ENCODE measurements at regions of chr11 and their contacts with region 1.

Region 1: GRCh38 chr11:95150946-95151684 is 61.5 kb downstream of the ENDOD1 start:
- DNase-seq: peak; percentile 91 to 93 (median 91)
- H3K4me3 ChIP-seq: peak overlapping the region; percentile 45 to 87
- H3K4me3 Mint-ChIP-seq: peak overlapping the region; percentile 85 to 96 (median 90)
- H3K27ac ChIP-seq: peak overlapping the region; percentile 80
- H3K27ac Mint-ChIP-seq: peak overlapping the region; percentile 90 to 99 (median 97)
- H3K4me1 ChIP-seq: peaks cover 35% of the 10 kb centered on the region
- H3K4me1 Mint-ChIP-seq: peaks cover 26 to 44% (median 36%) of the 10 kb centered on the region in 4 donors
- H3K27me3 ChIP-seq: no peaks in the 10 kb centered on the region
- H3K27me3 Mint-ChIP-seq: peaks cover 2 to 8% of the 10 kb centered on the region in 2 donors

Region 2: DNA sequence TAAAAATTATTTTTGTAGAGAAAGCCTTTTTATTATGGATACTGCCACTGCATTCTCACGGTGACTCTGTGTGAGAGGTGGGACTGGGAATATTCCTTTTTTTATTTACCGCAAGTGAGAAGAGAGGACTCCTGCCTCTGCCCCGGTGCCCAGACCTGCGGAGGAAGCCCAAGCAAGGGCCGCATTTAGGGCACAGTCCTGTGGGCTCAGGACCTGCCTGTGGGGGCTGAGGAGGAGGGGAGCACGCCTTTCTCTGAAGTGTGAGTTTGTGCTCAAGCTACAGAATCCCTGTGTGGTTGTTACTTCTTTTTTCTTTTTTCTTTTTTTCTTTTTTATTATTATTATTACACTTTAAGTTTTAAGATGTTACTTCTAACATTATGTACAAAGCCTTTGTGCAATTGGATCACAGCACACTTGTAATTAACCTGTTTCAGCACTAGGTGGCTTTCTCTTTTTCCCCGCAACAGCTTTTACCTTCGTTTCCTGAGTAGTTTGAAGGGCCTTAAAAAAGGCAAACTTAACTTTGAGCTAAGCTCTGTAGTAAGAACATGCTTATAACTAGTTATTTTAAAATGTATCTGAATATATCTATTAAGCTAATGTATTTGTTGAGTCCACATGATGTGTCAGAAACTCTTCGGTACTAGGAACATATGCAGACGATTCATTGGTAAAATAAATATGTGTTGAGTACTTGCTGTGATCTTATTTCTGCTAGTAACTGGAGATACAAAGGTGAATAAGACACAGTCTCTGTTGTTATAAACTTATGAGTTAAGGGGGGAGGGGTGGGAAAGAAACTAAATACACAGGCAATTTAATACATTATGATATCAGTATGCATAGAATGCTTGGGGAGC is 364.6 kb before region 1 on chr11:
- CTCF ChIA-PET with region 1: no interaction called
- POLR2A ChIA-PET with region 1: no interaction called
- intact Hi-C with region 1: loop called (anchors 5 kb)
- DNase-seq: peak in 3 of 5 donors; percentile 15 to 21 (median 16)
- H3K4me3 ChIP-seq: no peak overlapping the region
- H3K4me3 Mint-ChIP-seq: no peak overlapping the region
- H3K27ac ChIP-seq: no peak overlapping the region
- H3K27ac Mint-ChIP-seq: no peak overlapping the region
- H3K4me1 ChIP-seq: no peaks in the 10 kb centered on the region
- H3K4me1 Mint-ChIP-seq: no peaks in the 10 kb centered on the region
- H3K27me3 ChIP-seq: peaks cover 4% of the 10 kb centered on the region
- H3K27me3 Mint-ChIP-seq: peaks cover 9 to 11% of the 10 kb centered on the region in 2 donors

Region 3: GRCh38 chr11:95119374-95120060 is 31.6 kb before region 1 on chr11:
- CTCF ChIA-PET with region 1: no interaction called
- POLR2A ChIA-PET with region 1: no interaction called
- intact Hi-C with region 1: no loop called
- DNase-seq: no peak
- H3K4me3 ChIP-seq: no peak overlapping the region
- H3K4me3 Mint-ChIP-seq: no peak overlapping the region
- H3K27ac ChIP-seq: no peak overlapping the region
- H3K27ac Mint-ChIP-seq: no peak overlapping the region
- H3K4me1 ChIP-seq: no peaks in the 10 kb centered on the region
- H3K4me1 Mint-ChIP-seq: peaks cover 0 to 9% (median 2%) of the 10 kb centered on the region in 4 donors
- H3K27me3 ChIP-seq: no peaks in the 10 kb centered on the region
- H3K27me3 Mint-ChIP-seq: no peaks in the 10 kb centered on the region

Region 4: GRCh38 chr11:95138448-95138847 is 12.7 kb before region 1 on chr11:
- CTCF ChIA-PET with region 1: interaction called, 11 read pairs
- POLR2A ChIA-PET with region 1: no interaction called
- intact Hi-C with region 1: no loop called
- DNase-seq: no peak
- H3K4me3 ChIP-seq: no peak overlapping the region
- H3K4me3 Mint-ChIP-seq: no peak overlapping the region
- H3K27ac ChIP-seq: no peak overlapping the region
- H3K27ac Mint-ChIP-seq: no peak overlapping the region
- H3K4me1 ChIP-seq: no peaks in the 10 kb centered on the region
- H3K4me1 Mint-ChIP-seq: peaks cover 0 to 2% (median 0%) of the 10 kb centered on the region in 4 donors
- H3K27me3 ChIP-seq: no peaks in the 10 kb centered on the region
- H3K27me3 Mint-ChIP-seq: peaks cover 0 to 10% of the 10 kb centered on the region in 2 donors

Region 5: GRCh38 chr11:95254131-95254704 is 103.1 kb after region 1 on chr11:
- CTCF ChIA-PET with region 1: interaction called, 8 read pairs
- POLR2A ChIA-PET with region 1: interaction called, 12 read pairs
- intact Hi-C with region 1: no loop called
- DNase-seq: peak; percentile 79 to 88 (median 81)
- H3K4me3 ChIP-seq: peak overlapping the region; percentile 26 to 36
- H3K4me3 Mint-ChIP-seq: peak overlapping the region; percentile 88 to 96 (median 92)
- H3K27ac ChIP-seq: peak overlapping the region; percentile 49
- H3K27ac Mint-ChIP-seq: peak overlapping the region; percentile 91 to 99 (median 95)
- H3K4me1 ChIP-seq: peaks cover 38% of the 10 kb centered on the region
- H3K4me1 Mint-ChIP-seq: peaks cover 23 to 42% (median 36%) of the 10 kb centered on the region in 4 donors
- H3K27me3 ChIP-seq: no peaks in the 10 kb centered on the region
- H3K27me3 Mint-ChIP-seq: peaks cover 0 to 2% of the 10 kb centered on the region in 2 donors

Region 6: GRCh38 chr11:95279921-95280868 is 129.1 kb after region 1 on chr11:
- CTCF ChIA-PET with region 1: no interaction called
- POLR2A ChIA-PET with region 1: no interaction called
- intact Hi-C with region 1: no loop called
- DNase-seq: no peak
- H3K4me3 ChIP-seq: no peak overlapping the region
- H3K4me3 Mint-ChIP-seq: no peak overlapping the region
- H3K27ac ChIP-seq: no peak overlapping the region
- H3K27ac Mint-ChIP-seq: no peak overlapping the region
- H3K4me1 ChIP-seq: no peaks in the 10 kb centered on the region
- H3K4me1 Mint-ChIP-seq: no peaks in the 10 kb centered on the region
- H3K27me3 ChIP-seq: no peaks in the 10 kb centered on the region
- H3K27me3 Mint-ChIP-seq: peaks cover 0 to 3% of the 10 kb centered on the region in 2 donors

Region 7: DNA sequence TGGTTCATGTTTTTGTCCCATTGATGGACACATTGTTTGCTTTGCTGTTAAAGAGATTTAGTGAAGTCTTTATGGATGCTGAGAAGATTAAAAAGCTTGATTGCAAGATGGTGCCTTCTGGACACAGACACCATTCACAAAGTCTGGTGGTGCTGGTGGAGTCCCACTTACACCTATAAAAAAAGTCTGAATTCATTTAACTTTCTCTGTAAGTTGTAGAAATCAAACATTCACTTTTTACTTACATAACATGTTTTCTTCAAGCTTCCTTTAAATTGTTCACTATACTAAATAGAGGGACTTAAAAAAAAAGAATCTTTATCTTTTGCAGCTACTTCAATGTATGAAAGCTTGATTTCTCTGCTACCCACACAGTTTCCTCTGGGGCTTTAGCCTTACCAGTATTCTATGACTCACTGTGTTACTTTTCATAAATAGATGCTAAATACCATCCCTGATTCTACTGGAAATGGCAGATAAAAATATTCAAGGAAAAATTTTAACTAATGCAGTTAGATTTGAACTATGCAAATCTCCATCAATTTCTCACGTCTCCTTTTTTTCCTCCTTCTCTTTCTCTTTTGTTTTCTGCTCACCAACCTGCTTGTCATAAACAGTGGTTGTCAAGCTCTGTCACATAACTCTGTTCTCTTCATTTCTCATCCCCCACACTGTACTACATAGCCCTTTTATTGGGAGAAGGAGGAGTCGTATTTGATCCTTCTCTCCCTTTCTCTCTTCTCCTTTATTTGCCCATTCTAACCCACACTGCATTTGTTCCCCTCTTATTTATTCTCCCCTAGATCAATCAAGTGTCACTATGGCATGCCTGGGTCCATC is 548.7 kb after region 1 on chr11:
- CTCF ChIA-PET with region 1: interaction called, 446 read pairs
- POLR2A ChIA-PET with region 1: interaction called, 53 read pairs
- intact Hi-C with region 1: loop called (anchors 1 kb)
- DNase-seq: peak; percentile 39 to 52 (median 43)
- H3K4me3 ChIP-seq: peak overlapping the region; percentile 3 to 33
- H3K4me3 Mint-ChIP-seq: peak overlapping the region; percentile 72 to 88 (median 82)
- H3K27ac ChIP-seq: peak overlapping the region; percentile 65
- H3K27ac Mint-ChIP-seq: peak overlapping the region; percentile 90 to 97 (median 96)
- H3K4me1 ChIP-seq: peaks cover 80% of the 10 kb centered on the region
- H3K4me1 Mint-ChIP-seq: peaks cover 38 to 60% (median 54%) of the 10 kb centered on the region in 4 donors
- H3K27me3 ChIP-seq: no peaks in the 10 kb centered on the region
- H3K27me3 Mint-ChIP-seq: no peaks in the 10 kb centered on the region

Region 8: GRCh38 chr11:96389720-96390487 is 1238.8 kb after region 1 on chr11 and contains the starts of genes CCDC82 and JRKL:
- CTCF ChIA-PET with region 1: no interaction called
- POLR2A ChIA-PET with region 1: interaction called, 6 read pairs
- intact Hi-C with region 1: loop called (anchors 2 kb)
- DNase-seq: peak; percentile 97 to 99 (median 98)
- H3K4me3 ChIP-seq: peak within 1 kb of the TSS; percentile 85 to 93
- H3K4me3 Mint-ChIP-seq: peak within 1 kb of the TSS; percentile 92 to 98 (median 94)
- H3K27ac ChIP-seq: peak within 1 kb of the TSS; percentile 79
- H3K27ac Mint-ChIP-seq: peak within 1 kb of the TSS; percentile 91 to 98 (median 97)
- H3K4me1 ChIP-seq: peaks cover 36% of the 10 kb centered on the region
- H3K4me1 Mint-ChIP-seq: peaks cover 22 to 59% (median 37%) of the 10 kb centered on the region in 4 donors
- H3K27me3 ChIP-seq: no peaks in the 10 kb centered on the region
- H3K27me3 Mint-ChIP-seq: no peaks in the 10 kb centered on the region
- total RNA-seq, gene CCDC82: 37.9 to 42.8 TPM
- total RNA-seq, gene JRKL: 18.3 to 20.0 TPM